ENCODE measurements at regions of chr5 and their contacts with region 1.

Region 1: GRCh38 chr5:73792687-73793320 is 166.8 kb downstream of the ARHGEF28 start:
- DNase-seq: peak; percentile 78
- H3K4me3 ChIP-seq: no peak overlapping the region
- H3K27ac ChIP-seq: no peak overlapping the region
- H3K4me1 ChIP-seq: peaks cover 7 to 16% of the 10 kb centered on the region in 2 donors
- H3K27me3 ChIP-seq: no peaks in the 10 kb centered on the region
- CTCF ChIP-seq: peak; percentile 91 to 99 (median 97)
- POLR2A ChIP-seq: no peak

Region 2: DNA sequence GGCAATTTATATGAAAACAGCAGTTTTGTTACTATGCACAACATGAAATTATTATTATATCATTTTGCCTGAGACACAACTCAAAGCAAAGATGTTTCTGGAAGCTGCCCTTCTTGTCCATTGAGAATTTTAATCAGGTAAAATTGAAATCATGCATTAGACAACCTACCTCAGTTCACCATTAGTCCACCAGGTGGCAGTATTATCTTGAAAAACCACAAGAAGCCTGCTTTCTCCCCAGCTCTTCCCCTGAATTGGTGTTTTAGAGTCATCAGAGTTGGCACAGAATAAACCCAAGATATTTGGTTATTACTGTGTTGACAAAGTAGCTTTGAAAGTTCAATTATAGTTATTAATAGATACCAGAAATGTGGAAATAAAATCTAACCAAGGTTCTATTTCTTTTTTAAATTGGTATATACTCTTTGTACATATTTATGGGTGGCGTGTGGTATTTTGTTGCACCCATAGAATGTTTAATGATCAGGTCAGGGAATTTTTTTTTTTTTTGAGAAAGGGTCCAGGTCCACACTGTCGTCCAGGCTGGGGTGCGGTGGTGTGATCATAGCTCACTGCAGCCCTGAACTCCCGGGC is 201.6 kb before region 1 on chr5:
- intact Hi-C with region 1: loop called (anchors 2 kb)
- DNase-seq: peak; percentile 35 to 44
- H3K4me3 ChIP-seq: no peak overlapping the region
- H3K27ac ChIP-seq: no peak overlapping the region
- H3K4me1 ChIP-seq: peaks cover 6 to 14% of the 10 kb centered on the region in 2 donors
- H3K27me3 ChIP-seq: no peaks in the 10 kb centered on the region
- CTCF ChIP-seq: peak; percentile 60 to 95 (median 84)
- POLR2A ChIP-seq: no peak

Region 3: GRCh38 chr5:73974871-73975360 is 182.1 kb after region 1 on chr5:
- intact Hi-C with region 1: no loop called
- DNase-seq: no peak
- H3K4me3 ChIP-seq: no peak overlapping the region
- H3K27ac ChIP-seq: no peak overlapping the region
- H3K4me1 ChIP-seq: no peaks in the 10 kb centered on the region
- H3K27me3 ChIP-seq: no peaks in the 10 kb centered on the region
- CTCF ChIP-seq: no peak
- POLR2A ChIP-seq: no peak

Region 4: DNA sequence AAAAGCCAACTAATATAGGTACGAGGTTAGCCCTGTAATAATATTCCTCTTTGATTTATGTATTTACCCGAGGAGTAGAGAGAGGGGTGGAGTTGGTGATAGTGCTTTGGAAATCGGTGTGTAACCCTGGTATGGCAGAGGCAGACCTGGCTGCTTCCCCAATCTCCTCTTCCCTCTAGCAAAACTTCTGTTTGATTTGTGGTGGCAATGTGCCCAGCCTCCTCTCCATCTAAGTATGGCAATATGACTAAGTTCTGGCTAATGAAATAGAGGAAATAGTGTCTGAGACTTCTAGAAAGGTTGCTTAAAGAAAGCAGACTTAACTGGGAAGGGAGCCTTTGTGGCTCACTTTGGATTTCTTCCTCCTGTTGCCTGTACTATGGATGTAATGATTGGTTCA is 356.6 kb after region 1 on chr5:
- intact Hi-C with region 1: no loop called
- DNase-seq: peak; percentile 86 to 88
- H3K4me3 ChIP-seq: no peak overlapping the region
- H3K27ac ChIP-seq: no peak overlapping the region
- H3K4me1 ChIP-seq: no peaks in the 10 kb centered on the region
- H3K27me3 ChIP-seq: no peaks in the 10 kb centered on the region
- CTCF ChIP-seq: no peak
- POLR2A ChIP-seq: no peak

Region 5: DNA sequence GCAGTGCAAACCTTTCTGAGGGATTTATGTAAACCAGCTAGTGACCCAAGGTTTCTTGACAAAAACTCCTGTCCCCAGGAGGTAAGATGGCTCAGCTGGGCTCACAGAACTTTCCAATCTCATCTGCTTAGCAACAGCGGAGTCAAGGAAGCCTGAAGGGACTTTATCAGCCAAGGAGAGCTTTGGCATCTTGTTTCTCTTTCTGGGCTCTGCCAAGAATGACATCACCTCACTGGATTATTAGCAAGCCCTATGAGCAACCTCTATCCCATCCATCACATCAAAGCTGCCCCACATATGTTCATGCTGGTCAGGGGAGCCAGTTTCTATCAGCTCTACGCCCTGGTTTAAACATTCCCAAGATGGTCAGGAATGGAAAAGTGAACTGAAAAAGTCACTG is 386.4 kb after region 1 on chr5:
- intact Hi-C with region 1: no loop called
- DNase-seq: no peak
- H3K4me3 ChIP-seq: no peak overlapping the region
- H3K27ac ChIP-seq: no peak overlapping the region
- H3K4me1 ChIP-seq: no peaks in the 10 kb centered on the region
- H3K27me3 ChIP-seq: no peaks in the 10 kb centered on the region
- CTCF ChIP-seq: no peak
- POLR2A ChIP-seq: no peak